Activated CD4-positive, alpha-beta memory T cell treated with anti-CD3 and anti-CD28 coated beads for 36 hours (primary cell): ENCODE measurements at regions of chr2 and their contacts with region 1.

Region 1: DNA sequence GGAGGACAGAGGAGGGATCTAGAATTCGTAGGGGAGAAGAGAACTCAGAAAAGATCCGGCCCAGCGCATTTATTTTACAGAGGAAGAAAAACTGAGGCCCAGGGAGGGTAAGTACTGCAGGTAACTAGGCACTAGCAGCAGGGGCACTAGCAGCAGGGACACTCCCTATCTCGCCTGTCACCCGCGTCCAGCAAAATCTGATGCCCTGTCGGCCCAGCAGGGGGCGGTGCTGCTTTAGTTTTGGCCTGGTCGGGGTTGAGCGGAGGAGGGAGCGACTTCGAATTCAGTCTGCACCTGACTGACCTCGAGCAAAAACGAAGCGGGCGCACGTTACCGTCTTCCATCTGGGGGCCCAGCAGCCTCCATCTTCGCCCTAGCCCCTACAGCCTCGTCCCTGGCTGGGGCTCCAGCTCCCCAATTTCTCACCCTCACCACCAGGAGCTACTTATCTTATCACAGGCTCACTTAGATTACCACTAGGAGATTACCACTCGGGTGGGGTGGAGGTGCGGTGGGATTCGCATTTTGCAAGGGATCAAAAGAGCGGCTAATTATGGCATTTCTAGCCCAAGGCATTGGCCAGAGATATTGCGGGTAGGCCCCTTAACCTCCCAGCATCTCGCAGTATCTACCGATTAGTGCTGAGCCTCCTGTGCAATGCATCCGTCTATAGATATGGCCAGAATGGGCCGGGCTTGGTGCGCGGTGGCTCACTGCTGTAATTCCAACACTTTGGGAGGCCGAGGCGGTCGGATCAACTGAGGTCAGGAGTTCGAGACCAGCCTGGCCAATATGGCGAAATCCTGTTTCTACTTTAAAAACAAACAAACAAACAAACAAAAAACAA is 17.8 kb upstream of the CD8A start:
- DNase-seq: peak; percentile 96
- H3K4me3 Mint-ChIP-seq: peak overlapping the region; percentile 74
- H3K27ac Mint-ChIP-seq: no peak overlapping the region
- H3K4me1 Mint-ChIP-seq: peaks cover 22% of the 10 kb centered on the region
- H3K27me3 Mint-ChIP-seq: peaks cover 41% of the 10 kb centered on the region

Region 2: GRCh38 chr2:86704459-86704971 is 104.0 kb before region 1 on chr2:
- CTCF ChIA-PET with region 1: no interaction called
- POLR2A ChIA-PET with region 1: no interaction called
- intact Hi-C with region 1: no loop called
- DNase-seq: no peak
- H3K4me3 Mint-ChIP-seq: no peak overlapping the region
- H3K27ac Mint-ChIP-seq: no peak overlapping the region
- H3K4me1 Mint-ChIP-seq: no peaks in the 10 kb centered on the region
- H3K27me3 Mint-ChIP-seq: peaks cover 3% of the 10 kb centered on the region

Region 3: GRCh38 chr2:86790676-86791572 is 17.6 kb before region 1 on chr2 and contains the start of gene CD8A:
- CTCF ChIA-PET with region 1: interaction called, 4 read pairs
- POLR2A ChIA-PET with region 1: no interaction called
- intact Hi-C with region 1: loop called (anchors 2 kb)
- DNase-seq: peak; percentile 48
- H3K4me3 Mint-ChIP-seq: peak within 1 kb of the TSS; percentile 71
- H3K27ac Mint-ChIP-seq: no peak within 1 kb of the TSS
- H3K4me1 Mint-ChIP-seq: peaks cover 21% of the 10 kb centered on the region
- H3K27me3 Mint-ChIP-seq: peaks cover 66% of the 10 kb centered on the region
- total RNA-seq, gene CD8A: 2.7 to 3.0 TPM